HEK293T (cell line): ENCODE measurements at regions of chr15 and their contacts with region 1.

Region 1: GRCh38 chr15:75201609-75202250 is at the start of gene C15orf39:
- DNase-seq: peak; percentile 94

Region 2: DNA sequence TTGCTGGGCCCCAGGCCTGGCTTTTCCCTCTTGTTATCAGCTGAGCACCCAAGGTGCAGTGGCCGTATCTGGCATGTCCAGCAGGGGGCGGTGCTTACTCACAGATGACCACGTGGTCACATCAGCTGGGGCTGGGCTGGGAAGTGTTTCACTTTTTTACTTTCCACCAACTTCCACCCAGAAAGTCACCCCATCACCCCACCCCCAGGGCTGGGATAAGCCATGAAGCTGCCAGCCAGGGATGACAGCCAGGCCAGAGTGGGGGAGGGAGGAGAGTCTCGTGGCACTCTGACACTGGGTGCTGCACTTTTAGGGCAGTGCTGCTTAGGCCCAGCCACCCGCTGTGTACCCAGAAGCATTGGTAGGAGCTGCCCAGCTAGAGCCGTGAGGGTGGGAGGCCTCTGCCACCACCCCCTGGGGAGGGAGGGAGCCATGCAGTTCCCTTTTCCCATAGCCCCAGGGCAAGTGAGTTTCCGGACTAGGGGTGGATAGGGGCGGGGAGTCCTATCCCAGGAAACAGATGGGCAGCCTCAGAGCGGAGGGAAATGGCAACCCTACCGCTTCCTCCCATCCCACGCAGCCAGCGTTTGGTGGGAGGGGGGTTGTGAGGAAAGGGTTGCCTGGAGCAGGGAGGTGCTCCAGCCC is 172.2 kb before region 1 on chr15:
- CTCF ChIA-PET with region 1: interaction called, 33 read pairs
- POLR2A ChIA-PET with region 1: interaction called, 9 read pairs
- DNase-seq: peak; percentile 85

Region 3: DNA sequence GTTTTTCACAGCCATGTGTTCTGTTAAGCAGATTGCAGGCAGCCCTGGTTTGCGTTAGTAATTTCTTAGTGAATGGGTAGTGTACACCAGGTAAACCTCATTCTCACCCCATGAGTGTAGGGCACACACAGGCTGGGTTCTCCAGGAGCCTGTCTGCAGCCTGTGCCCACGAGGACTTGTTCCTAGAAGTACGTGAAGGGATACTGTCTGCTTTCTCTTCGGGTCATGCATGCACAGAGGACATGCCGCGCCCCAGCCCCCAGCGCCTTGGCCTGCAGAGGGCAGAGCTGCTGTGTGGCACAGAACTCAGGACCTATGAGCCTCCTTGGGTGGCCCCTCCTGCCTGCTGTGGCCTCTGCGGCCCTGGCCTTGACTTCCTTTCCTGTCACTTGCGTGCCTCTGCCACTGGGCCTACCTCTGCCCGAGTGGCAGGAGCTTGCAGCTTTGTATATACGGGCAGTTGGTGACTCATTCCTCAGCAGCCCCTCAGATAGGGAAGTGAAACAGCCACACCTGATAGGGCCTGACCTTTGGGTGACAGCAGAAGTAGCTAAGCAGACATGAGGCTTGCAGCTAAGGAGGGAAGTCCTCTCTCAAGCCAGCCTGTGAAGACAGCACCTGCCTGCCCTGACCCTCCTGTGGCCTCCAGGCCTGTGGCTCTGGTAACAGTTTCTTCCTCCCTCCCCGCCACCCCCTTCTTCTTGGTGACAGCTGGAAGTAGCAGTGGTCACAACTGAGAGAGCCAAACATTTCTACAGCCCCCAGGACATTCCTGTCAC is 158.8 kb before region 1 on chr15:
- CTCF ChIA-PET with region 1: interaction called, 16 read pairs
- POLR2A ChIA-PET with region 1: interaction called, 8 read pairs
- DNase-seq: no peak

Region 4: DNA sequence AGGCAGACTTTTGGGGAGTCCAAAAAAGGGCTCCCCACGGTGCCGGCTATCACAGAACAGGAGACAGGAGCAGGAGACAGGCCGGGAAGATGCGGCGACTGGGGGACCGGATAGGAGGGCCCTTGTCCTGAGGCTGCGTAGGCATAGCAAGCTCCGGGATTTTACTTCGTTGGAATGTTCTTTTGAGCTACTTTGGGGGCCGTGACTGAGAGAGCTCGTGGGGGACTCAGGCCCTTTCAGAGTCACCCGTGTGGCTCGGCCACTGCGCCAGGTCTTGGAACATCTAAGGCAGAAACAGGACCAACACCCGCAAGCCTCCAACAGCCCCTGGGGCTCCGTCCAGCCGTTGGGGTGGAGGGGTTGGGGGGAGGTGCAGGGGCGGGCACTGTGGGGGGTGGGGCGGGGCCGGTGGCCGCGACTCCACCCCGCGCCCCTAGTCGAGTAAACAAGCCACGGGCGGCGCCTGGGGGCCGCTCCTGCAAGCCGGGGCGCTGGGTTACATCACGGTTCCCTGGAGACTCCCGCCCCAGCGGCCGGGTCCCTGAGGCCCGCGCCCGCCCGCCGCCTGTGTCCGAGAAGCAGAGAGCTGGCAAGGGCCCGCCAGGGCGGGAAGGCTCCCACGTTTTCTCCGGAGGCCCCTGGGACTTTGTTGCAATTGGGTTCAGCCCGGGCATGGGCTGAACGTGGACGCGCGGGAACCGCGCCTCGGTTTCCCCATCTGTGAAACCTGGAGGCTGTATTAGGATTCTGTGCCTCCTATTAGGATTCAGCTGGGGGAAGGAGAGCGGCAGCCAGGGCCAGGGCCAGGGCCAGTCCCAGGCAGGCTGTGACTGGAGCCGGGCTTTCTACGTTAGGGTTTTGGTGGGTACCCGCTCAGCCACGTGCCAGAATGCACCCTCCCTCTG is 23.3 kb before region 1 on chr15:
- CTCF ChIA-PET with region 1: interaction called, 10 read pairs
- POLR2A ChIA-PET with region 1: interaction called, 38 read pairs
- DNase-seq: no peak

Region 5: GRCh38 chr15:75215107-75216004 is 13.6 kb after region 1 on chr15:
- CTCF ChIA-PET with region 1: interaction called, 12 read pairs
- POLR2A ChIA-PET with region 1: interaction called, 3 read pairs
- DNase-seq: no peak

Region 6: DNA sequence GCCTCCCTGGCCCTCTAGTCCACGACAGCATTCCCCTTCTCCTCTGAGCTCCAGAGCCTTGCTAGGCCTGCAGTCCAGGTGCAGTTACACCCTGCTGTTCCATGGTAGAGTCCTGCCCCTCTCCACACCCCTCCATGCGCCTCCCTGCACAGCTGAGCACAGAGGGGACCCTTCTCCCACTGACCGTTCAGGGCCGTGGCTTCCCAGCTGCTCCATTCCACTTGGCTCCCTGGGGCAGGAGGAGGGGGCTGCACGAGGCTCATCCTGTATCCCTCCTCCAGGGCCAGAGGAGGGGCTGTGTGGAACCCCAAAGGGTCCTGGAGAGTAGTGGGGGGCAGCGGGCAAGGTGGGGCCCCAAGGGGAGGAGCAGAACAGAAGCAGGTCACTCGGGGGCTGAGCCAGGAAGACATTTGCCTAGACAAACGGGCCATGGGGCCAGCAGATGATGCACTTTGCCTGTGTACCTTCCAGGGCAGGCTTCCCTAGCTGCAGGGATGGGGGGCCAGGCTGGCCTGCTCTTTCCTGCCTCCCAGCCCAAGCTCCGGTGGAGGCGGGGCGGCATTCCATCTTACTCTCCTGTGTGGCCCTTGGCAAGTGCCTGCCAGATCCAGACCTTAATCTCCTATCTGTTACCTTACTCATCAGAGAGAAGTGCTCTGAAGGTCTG is 35.7 kb after region 1 on chr15:
- CTCF ChIA-PET with region 1: no interaction called
- POLR2A ChIA-PET with region 1: no interaction called
- DNase-seq: no peak

Region 7: DNA sequence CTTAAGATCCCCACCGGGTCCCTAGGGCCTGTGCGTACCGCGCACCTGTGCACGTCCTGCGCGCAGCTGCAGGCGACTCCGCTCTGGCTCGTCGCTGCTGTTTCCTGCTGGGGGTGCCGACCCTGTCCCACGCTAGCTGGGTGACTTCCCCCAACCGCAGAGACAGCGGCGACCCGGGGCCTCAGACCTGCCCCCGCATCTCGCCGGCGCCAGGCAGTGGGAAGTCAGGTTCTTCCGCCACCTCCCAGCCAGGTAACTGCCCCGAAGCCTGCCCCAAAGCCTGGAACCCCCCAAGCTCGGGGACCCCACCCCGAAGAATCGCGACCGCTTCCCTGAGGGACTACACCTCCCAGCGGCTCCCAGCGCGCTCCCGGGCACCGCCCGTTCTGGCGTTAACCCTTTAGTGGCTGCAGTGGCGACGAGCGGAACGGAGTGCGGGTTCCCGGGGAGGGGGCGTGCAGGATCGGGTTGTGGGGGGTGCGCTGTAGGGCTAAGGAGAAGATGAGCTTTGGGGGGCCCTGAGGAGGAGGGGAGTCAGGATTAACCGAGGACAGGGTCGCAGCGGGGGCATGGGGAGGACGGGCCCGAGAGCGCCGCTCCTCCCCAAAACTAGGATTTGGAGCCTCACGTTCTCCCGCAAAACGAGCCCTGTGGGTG is 145.6 kb after region 1 on chr15:
- CTCF ChIA-PET with region 1: no interaction called
- POLR2A ChIA-PET with region 1: no interaction called
- DNase-seq: peak; percentile 74